ENCODE measurements at regions of chr12 and their contacts with region 1.

Region 1: GRCh38 chr12:14443531-14443930 is 78.0 kb downstream of the ATF7IP start:
- DNase-seq: no peak
- H3K27ac ChIP-seq: no peak overlapping the region
- CTCF ChIP-seq: no peak

Region 2: GRCh38 chr12:14362352-14362751 is 81.2 kb before region 1 on chr12:
- CTCF ChIA-PET with region 1: no interaction called
- POLR2A ChIA-PET with region 1: interaction called, 23 read pairs
- DNase-seq: no peak
- H3K27ac ChIP-seq: no peak overlapping the region
- CTCF ChIP-seq: no peak

Region 3: DNA sequence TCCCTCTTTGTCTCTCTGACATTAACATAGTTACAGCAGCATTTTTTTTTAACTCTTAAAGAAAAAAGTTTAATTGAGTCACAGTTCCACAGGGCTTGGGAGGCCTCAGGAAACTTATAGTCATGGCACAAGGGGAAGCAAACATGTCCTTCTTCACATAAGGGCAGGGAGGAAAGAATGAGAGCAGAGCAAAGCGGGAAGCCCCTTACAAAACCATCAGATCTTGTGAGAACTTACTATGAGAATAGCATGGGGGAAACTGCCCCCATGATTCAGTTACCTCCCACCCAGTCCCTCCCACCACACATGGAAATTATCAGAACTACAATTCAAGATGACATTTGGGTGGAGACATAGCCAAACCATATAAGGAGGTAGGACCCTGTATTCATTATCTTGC is 28.0 kb after region 1 on chr12:
- CTCF ChIA-PET with region 1: no interaction called
- POLR2A ChIA-PET with region 1: no interaction called
- DNase-seq: no peak
- H3K27ac ChIP-seq: no peak overlapping the region
- CTCF ChIP-seq: no peak